ENCODE measurements at regions of chr5 and their contacts with region 1.

Region 1: GRCh38 chr5:76402886-76403765 is at the start of gene IQGAP2:
- DNase-seq: peak; percentile 82
- ATAC-seq: peak; percentile 75
- H3K4me3 Mint-ChIP-seq: peak within 1 kb of the TSS; percentile 95
- H3K27ac Mint-ChIP-seq: peak within 1 kb of the TSS; percentile 97
- H3K4me1 Mint-ChIP-seq: peaks cover 51% of the 10 kb centered on the region
- H3K27me3 Mint-ChIP-seq: peaks cover 3% of the 10 kb centered on the region
- CTCF ChIP-seq: no peak
- total RNA-seq, gene IQGAP2: 6.7 and 8.8 TPM in 2 replicates

Region 2: DNA sequence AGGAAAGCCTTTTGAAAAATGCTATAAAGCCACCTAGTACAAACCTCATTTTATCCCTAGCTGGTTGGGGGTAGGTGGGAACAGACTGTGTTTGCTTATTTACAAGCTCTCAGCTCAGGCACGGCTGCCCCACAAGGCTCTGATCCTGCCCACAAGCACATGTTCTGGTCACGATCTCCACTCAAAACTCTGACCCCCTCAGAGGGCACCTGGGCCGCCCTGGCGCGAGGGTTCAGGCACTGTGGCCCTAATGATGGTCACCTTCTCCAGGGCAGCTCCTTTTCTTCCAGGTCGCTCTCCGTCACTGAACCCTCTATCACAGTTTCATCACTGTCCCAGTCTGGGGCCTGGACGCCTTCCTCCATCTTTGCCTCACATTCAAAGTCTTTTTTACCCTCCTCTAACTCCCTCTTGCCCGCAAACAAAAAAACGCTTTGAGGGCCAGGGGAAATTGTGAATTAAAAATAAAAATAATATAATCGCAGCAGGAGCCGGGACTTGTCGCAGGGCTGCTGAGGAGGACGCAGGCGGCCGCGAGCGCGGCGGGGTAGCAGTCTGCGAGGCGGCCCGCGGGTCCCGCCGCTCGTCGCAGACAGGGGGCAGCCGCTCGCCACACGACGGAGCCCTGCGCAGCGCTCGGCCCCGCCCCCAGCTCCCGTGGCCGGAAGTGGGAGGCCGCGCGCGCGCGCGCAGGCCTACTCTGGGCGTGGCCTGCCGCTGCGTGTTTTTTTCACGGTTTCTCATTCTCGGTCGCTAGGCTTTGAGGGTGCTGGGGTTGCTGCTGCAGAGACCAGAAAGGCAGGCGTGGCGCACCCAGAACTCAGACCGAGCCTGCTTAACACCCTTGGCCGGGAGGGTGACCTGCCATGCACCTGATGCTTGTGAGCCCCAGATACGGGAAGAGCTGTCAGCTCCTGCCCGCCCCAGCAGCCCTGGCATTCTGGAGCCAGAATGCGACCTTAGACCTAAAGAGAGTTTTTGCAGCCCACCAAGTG is 1166.5 kb before region 1 on chr5 and contains the start of gene ANKRD31:
- CTCF ChIA-PET with region 1: no interaction called
- POLR2A ChIA-PET with region 1: no interaction called
- intact Hi-C with region 1: loop called (anchors 10 kb)
- DNase-seq: peak; percentile 89
- ATAC-seq: peak; percentile 99
- H3K4me3 Mint-ChIP-seq: peak within 1 kb of the TSS; percentile 93
- H3K27ac Mint-ChIP-seq: peak within 1 kb of the TSS; percentile 83
- H3K4me1 Mint-ChIP-seq: peaks cover 9% of the 10 kb centered on the region
- H3K27me3 Mint-ChIP-seq: peaks cover 3% of the 10 kb centered on the region
- CTCF ChIP-seq: peak; percentile 62
- total RNA-seq, gene ANKRD31: 0.13 and 0.15 TPM in 2 replicates

Region 3: DNA sequence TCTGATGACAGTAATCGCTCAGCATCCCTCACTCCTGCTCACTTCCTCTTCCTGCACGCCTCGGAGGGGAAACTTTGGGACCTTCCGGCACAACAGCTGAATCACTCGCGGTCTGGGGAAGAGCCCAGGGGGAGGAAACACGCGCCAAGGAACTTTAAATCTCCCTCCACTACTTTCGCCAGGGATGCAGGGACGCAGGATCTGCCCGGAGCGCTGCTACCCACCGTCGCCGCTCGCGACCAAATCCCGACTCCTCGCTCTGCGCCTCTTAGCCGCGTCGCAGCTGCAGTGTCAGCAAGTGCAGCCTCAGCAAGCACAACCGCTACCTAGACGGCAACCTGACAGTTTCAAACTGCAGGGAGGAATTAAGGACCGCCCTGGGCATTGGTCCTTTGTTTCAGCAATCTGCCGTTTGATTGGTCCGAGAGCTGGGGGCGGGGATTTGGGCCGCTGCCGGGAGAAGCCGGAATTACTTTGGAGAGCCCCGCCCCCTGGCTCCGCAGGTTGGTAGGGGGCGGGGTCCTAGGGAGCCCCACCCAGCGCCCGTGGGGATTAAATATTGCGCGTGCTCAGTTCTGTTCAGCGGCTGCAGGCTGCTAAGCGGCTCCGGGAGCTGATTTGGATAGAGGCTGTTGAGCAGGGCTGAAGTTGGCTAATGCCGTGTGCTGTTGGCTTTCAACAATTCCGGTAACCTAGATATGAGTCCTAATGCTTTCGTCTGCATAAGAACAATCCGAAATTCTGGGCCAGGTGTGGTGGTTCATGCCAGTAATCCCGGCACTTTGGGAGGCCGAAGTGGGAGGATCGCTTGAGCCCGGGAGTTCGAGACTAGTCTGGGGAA is 685.8 kb before region 1 on chr5 and contains the start of gene POC5:
- CTCF ChIA-PET with region 1: no interaction called
- POLR2A ChIA-PET with region 1: interaction called, 13 read pairs
- intact Hi-C with region 1: loop called (anchors 2 kb)
- DNase-seq: peak; percentile 96
- ATAC-seq: peak; percentile 92
- H3K4me3 Mint-ChIP-seq: peak within 1 kb of the TSS; percentile 98
- H3K27ac Mint-ChIP-seq: peak within 1 kb of the TSS; percentile 98
- H3K4me1 Mint-ChIP-seq: peaks cover 32% of the 10 kb centered on the region
- H3K27me3 Mint-ChIP-seq: peaks cover 2% of the 10 kb centered on the region
- CTCF ChIP-seq: no peak
- total RNA-seq, gene POC5: 27.6 and 29.8 TPM in 2 replicates

Region 4: DNA sequence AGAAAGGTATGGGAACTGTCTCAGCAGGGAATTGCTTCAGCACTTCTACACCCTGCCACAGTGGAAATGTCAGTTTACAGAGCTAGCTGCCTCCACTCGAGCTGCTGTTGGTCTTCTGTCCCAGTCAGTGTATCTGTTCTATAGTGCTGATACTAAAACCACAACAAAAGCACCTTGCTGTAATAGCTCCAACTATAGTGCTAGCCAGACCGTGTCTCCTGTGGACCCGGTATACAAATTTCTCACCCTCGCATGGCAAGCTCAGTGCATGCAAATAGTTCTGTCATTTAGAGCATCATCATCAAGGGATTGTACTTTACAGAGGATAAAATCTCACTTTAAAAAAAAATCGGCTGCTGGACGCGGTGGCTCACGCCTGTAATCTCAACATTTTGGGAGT is 51.5 kb before region 1 on chr5:
- CTCF ChIA-PET with region 1: interaction called, 5 read pairs
- POLR2A ChIA-PET with region 1: interaction called, 3 read pairs
- intact Hi-C with region 1: loop called (anchors 1 kb)
- DNase-seq: peak; percentile 16
- ATAC-seq: peak; percentile 98
- H3K4me3 Mint-ChIP-seq: peak overlapping the region; percentile 35
- H3K27ac Mint-ChIP-seq: peak overlapping the region; percentile 66
- H3K4me1 Mint-ChIP-seq: peaks cover 24% of the 10 kb centered on the region
- H3K27me3 Mint-ChIP-seq: peaks cover 3% of the 10 kb centered on the region
- CTCF ChIP-seq: no peak

Region 5: GRCh38 chr5:76601470-76601869 is 198.3 kb after region 1 on chr5:
- CTCF ChIA-PET with region 1: interaction called, 4 read pairs
- POLR2A ChIA-PET with region 1: no interaction called
- intact Hi-C with region 1: loop called (anchors 1 kb)
- DNase-seq: no peak
- ATAC-seq: peak; percentile 49
- H3K4me3 Mint-ChIP-seq: no peak overlapping the region
- H3K27ac Mint-ChIP-seq: no peak overlapping the region
- H3K4me1 Mint-ChIP-seq: no peaks in the 10 kb centered on the region
- H3K27me3 Mint-ChIP-seq: no peaks in the 10 kb centered on the region
- CTCF ChIP-seq: no peak

Region 6: GRCh38 chr5:76771705-76772405 is 368.7 kb after region 1 on chr5:
- CTCF ChIA-PET with region 1: interaction called, 3 read pairs
- POLR2A ChIA-PET with region 1: no interaction called
- intact Hi-C with region 1: loop called (anchors 10 kb)
- DNase-seq: no peak
- ATAC-seq: no peak
- H3K4me3 Mint-ChIP-seq: no peak overlapping the region
- H3K27ac Mint-ChIP-seq: no peak overlapping the region
- H3K4me1 Mint-ChIP-seq: peaks cover 2% of the 10 kb centered on the region
- H3K27me3 Mint-ChIP-seq: no peaks in the 10 kb centered on the region
- CTCF ChIP-seq: no peak

Measured in activated B cell treated with CpG ODN at 0.5 μM for 24 hours (primary cell).